ENCODE measurements at regions of chr4 and their contacts with region 1.

Region 1: GRCh38 chr4:177441803-177442622 is at the start of gene AGA:
- DNase-seq: peak; percentile 94
- H3K4me3 Mint-ChIP-seq: peak within 1 kb of the TSS; percentile 90
- H3K27ac Mint-ChIP-seq: peak within 1 kb of the TSS; percentile 95
- H3K4me1 Mint-ChIP-seq: peaks cover 31% of the 10 kb centered on the region
- H3K27me3 Mint-ChIP-seq: no peaks in the 10 kb centered on the region
- total RNA-seq, gene AGA: 16.0 and 16.3 TPM in 2 replicates

Region 2: GRCh38 chr4:176902710-176903323 is 539.2 kb before region 1 on chr4:
- intact Hi-C with region 1: loop called (anchors 10 kb)
- DNase-seq: no peak
- H3K4me3 Mint-ChIP-seq: no peak overlapping the region
- H3K27ac Mint-ChIP-seq: peak overlapping the region; percentile 29
- H3K4me1 Mint-ChIP-seq: peaks cover 13% of the 10 kb centered on the region
- H3K27me3 Mint-ChIP-seq: peaks cover 3% of the 10 kb centered on the region

Region 3: GRCh38 chr4:177367336-177367735 is 74.7 kb before region 1 on chr4:
- intact Hi-C with region 1: loop called (anchors 1 kb)
- DNase-seq: no peak
- H3K4me3 Mint-ChIP-seq: no peak overlapping the region
- H3K27ac Mint-ChIP-seq: no peak overlapping the region
- H3K4me1 Mint-ChIP-seq: peaks cover 14% of the 10 kb centered on the region
- H3K27me3 Mint-ChIP-seq: no peaks in the 10 kb centered on the region

Region 4: DNA sequence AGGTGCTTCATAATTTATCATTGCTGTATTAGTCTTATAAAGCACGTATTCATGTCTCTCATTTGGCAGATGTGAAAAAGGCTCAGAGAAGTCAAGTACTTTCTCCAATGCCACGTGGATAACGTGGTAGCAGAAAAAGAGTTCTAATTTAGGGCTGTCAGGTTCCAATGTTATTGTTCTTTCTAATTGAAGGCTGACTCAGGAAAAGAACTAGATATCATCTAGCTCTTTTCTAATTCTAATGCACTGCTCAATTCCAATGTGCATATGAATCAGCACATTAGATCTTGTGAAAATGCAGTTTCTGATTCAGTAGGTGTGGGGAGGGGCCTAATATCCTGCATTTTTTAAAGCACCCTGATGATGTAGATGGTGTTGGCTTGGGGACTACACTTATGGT is 22.6 kb before region 1 on chr4:
- intact Hi-C with region 1: loop called (anchors 1 kb)
- DNase-seq: no peak
- H3K4me3 Mint-ChIP-seq: no peak overlapping the region
- H3K27ac Mint-ChIP-seq: no peak overlapping the region
- H3K4me1 Mint-ChIP-seq: no peaks in the 10 kb centered on the region
- H3K27me3 Mint-ChIP-seq: peaks cover 2% of the 10 kb centered on the region

Measured in activated T-helper 1 cell treated with anti-CD3 and anti-CD28 coated beads, Interleukin-12 subunit alpha, Interleukin-12 subunit beta, Interleukin-2, Interleukin-4 antibody, amounts not matched to agents 30 ng/mL and 10 ng/mL and 1 ng/mL, durations not matched to agents 14 hours and 24 hours and 36 hours (primary cell).